Right ventricle myocardium inferior (tissue), 1 donor: ENCODE measurements at regions of chr2 and their contacts with region 1.

Region 1: GRCh38 chr2:80073134-80073561 is 231.4 kb downstream of the LRRTM1 start:
- DNase-seq: no peak
- ATAC-seq: peak; percentile 48

Region 2: GRCh38 chr2:79393806-79394484 is 679.2 kb before region 1 on chr2:
- intact Hi-C with region 1: no loop called
- DNase-seq: no peak
- ATAC-seq: no peak

Region 3: GRCh38 chr2:80238692-80239469 is 165.7 kb after region 1 on chr2:
- intact Hi-C with region 1: loop called (anchors 5 kb)
- DNase-seq: no peak
- ATAC-seq: peak; percentile 62

Region 4: GRCh38 chr2:80311304-80311703 is 238.2 kb after region 1 on chr2:
- intact Hi-C with region 1: loop called (anchors 10 kb)
- DNase-seq: no peak
- ATAC-seq: no peak

Region 5: GRCh38 chr2:80499095-80499494 is 425.9 kb after region 1 on chr2:
- intact Hi-C with region 1: loop called (anchors 5 kb)
- DNase-seq: no peak
- ATAC-seq: peak; percentile 64